ENCODE measurements at regions of chr15 and their contacts with region 1.

Region 1: GRCh38 chr15:39756806-39757522 is 25.7 kb downstream of the FSIP1 start:
- DNase-seq: no peak
- ATAC-seq: no peak
- H3K4me3 ChIP-seq: no peak overlapping the region
- H3K27ac ChIP-seq: no peak overlapping the region
- H3K4me1 ChIP-seq: no peaks in the 10 kb centered on the region
- H3K27me3 ChIP-seq: no peaks in the 10 kb centered on the region
- CTCF ChIP-seq: peak; percentile 81 to 95 (median 84)
- POLR2A ChIP-seq: no peak

Region 2: GRCh38 chr15:38699633-38700230 is 1057.2 kb before region 1 on chr15:
- intact Hi-C with region 1: loop called in 3 of 10 experiments (anchors 10 kb)
- DNase-seq: peak in 3 of 5 donors; percentile 24 to 43 (median 34)
- ATAC-seq: peak in 2 of 4 donors; percentile 25 to 43
- H3K4me3 ChIP-seq: no peak overlapping the region
- H3K27ac ChIP-seq: no peak overlapping the region
- H3K4me1 ChIP-seq: peaks cover 0 to 15% (median 0%) of the 10 kb centered on the region in 12 donors
- H3K27me3 ChIP-seq: peaks cover 0 to 3% (median 0%) of the 10 kb centered on the region in 9 donors
- CTCF ChIP-seq: peak; percentile 68 to 90 (median 78)
- POLR2A ChIP-seq: no peak

Region 3: GRCh38 chr15:38817427-38818156 is 939.4 kb before region 1 on chr15:
- intact Hi-C with region 1: loop called in 5 of 10 experiments (anchors 5 to 10 kb)
- DNase-seq: peak; percentile 69 to 89 (median 74)
- ATAC-seq: peak; percentile 80 to 94 (median 91)
- H3K4me3 ChIP-seq: no peak overlapping the region
- H3K27ac ChIP-seq: peak overlapping the region in 1 of 12 donors; percentile 8
- H3K4me1 ChIP-seq: peaks cover 0 to 9% (median 0%) of the 10 kb centered on the region in 12 donors
- H3K27me3 ChIP-seq: no peaks in the 10 kb centered on the region
- CTCF ChIP-seq: peak; percentile 97 to 100 (median 98)
- POLR2A ChIP-seq: no peak

Region 4: GRCh38 chr15:39586387-39587171 is 170.4 kb before region 1 on chr15:
- intact Hi-C with region 1: loop called (anchors 5 to 10 kb)
- DNase-seq: no peak
- ATAC-seq: peak in 2 of 4 donors; percentile 9 to 40
- H3K4me3 ChIP-seq: no peak overlapping the region
- H3K27ac ChIP-seq: peak overlapping the region in 3 of 12 donors; percentile 6 to 50 (median 46)
- H3K4me1 ChIP-seq: peaks cover 0 to 58% (median 29%) of the 10 kb centered on the region in 12 donors
- H3K27me3 ChIP-seq: no peaks in the 10 kb centered on the region
- CTCF ChIP-seq: no peak
- POLR2A ChIP-seq: no peak

Region 5: GRCh38 chr15:39686000-39686613 is 70.9 kb before region 1 on chr15:
- intact Hi-C with region 1: loop called (anchors 1 to 5 kb)
- DNase-seq: peak in 2 of 5 donors; percentile 21 to 31
- ATAC-seq: peak in 3 of 4 donors; percentile 48 to 76 (median 64)
- H3K4me3 ChIP-seq: no peak overlapping the region
- H3K27ac ChIP-seq: no peak overlapping the region
- H3K4me1 ChIP-seq: peaks cover 0 to 6% (median 0%) of the 10 kb centered on the region in 12 donors
- H3K27me3 ChIP-seq: no peaks in the 10 kb centered on the region
- CTCF ChIP-seq: peak; percentile 69 to 86 (median 76)
- POLR2A ChIP-seq: no peak

Region 6: DNA sequence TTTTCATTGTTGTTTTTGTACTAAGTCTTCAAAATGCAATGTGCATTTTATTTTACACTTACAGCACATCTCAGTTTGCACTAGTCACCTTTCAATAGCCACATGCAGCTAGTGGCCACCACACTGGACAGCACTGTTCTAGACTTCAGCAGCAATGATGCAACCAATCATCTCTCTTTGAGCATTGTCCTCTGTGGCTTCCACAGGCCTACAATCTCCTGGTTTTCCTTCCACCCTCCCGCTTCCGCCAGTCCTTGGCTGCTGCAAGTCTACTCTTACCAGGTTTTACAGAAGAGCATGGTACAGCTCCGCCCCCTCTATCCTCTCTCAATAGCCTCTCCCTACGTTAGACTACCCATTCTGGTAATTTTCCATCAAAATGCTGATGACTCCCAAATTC is 50.8 kb after region 1 on chr15:
- intact Hi-C with region 1: no loop called
- DNase-seq: no peak
- ATAC-seq: no peak
- H3K4me3 ChIP-seq: no peak overlapping the region
- H3K27ac ChIP-seq: no peak overlapping the region
- H3K4me1 ChIP-seq: no peaks in the 10 kb centered on the region
- H3K27me3 ChIP-seq: no peaks in the 10 kb centered on the region
- CTCF ChIP-seq: no peak
- POLR2A ChIP-seq: no peak

Measured in heart left ventricle (tissue), 16 donors.